ENCODE measurements at regions of chr17 and their contacts with region 1.

Region 1: DNA sequence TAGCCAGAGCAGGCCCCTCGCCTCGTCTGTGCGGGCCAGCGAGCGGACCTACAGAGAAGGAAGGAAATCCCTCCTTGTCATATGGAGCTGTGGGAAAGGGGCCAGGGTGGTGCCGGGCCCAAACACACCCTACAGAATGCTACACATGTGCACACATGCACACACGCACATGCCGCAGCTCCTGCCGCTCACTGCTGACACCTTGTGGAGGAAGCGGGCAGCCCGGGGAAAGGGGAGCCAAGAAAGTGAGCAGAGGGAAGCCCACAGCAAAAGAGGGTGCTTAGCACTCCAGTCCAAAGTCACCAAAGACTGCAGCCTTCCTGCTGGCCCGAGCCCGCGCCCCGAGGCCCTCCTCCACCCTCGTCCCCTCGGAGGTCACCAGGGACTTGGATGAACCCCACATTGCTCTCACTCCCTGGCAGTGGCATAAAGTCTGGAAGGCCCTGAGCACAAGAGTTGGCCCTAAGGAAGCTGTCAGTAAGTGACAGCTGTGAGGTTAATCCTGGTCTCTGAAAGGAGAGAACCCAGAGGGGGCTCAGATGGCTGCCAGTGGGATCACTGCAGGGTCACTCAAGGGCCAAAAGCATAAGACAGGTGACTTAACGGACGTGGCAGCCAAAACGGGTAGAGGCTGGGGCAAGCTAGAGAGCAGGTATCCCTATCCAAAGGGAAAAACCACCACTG is 68.2 kb downstream of the MYO18A start:
- DNase-seq: peak; percentile 82
- H3K4me3 ChIP-seq: no peak overlapping the region
- H3K27ac ChIP-seq: no peak overlapping the region
- H3K4me1 ChIP-seq: peaks cover 5 to 39% of the 10 kb centered on the region in 2 experiments; a peak in 2 of 4 replicates
- H3K27me3 ChIP-seq: no peaks in the 10 kb centered on the region
- CTCF ChIP-seq: peak; percentile 91
- EP300 ChIP-seq: no peak
- RAD21 ChIP-seq: peak; percentile 94

Region 2: DNA sequence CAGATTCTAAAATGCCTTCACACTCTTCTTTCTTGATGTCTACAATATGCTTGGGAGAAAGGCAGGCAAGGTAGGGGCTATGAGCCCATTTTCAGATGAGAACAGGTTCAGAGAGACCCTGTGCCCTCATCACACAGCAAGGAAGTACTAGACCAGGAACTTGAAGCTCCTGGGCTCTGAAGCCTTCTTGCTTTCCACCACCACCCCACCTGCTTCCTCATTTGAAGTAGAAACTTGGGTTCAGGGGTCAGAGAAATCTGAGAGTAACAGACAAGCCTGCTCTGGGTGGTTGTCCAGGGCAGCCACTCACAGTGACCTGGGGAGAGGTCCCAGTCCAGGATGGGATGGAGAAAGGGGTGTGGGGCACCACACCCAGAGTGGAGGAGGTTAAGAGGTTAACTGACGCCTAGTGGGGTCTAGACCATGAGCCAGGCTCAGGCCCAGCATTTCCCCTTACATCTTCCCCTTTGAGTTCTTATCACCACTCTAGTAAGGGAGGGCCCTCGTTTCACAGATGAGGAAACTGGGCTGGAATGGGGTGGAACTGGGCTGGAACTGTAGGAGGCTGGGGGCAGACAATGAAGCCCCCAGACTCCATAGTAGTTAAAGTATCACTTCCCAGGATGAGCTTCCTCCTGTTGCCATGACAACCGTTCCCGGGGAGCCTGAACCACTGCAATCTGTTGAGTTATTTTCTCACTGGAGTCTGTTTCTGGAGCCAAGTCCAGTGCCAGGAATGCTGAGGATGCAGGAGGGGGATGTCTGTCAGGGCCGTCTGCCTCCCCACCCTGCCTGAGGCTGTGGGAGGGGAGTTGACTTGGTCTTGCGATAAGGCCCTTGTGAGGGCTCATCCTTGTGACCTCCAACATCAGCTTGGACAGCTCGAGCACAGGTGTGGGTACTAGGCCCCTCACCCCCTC is 144.5 kb before region 1 on chr17:
- CTCF ChIA-PET with region 1: interaction called, 947 read pairs
- POLR2A ChIA-PET with region 1: interaction called, 20 read pairs
- DNase-seq: no peak
- H3K4me3 ChIP-seq: no peak overlapping the region
- H3K27ac ChIP-seq: no peak overlapping the region
- H3K4me1 ChIP-seq: peaks cover 0 to 37% of the 10 kb centered on the region in 2 experiments; a peak in 3 of 4 replicates
- H3K27me3 ChIP-seq: no peaks in the 10 kb centered on the region; the same call in 1 of the 2 replicates
- CTCF ChIP-seq: no peak
- EP300 ChIP-seq: no peak
- RAD21 ChIP-seq: no peak

Region 3: DNA sequence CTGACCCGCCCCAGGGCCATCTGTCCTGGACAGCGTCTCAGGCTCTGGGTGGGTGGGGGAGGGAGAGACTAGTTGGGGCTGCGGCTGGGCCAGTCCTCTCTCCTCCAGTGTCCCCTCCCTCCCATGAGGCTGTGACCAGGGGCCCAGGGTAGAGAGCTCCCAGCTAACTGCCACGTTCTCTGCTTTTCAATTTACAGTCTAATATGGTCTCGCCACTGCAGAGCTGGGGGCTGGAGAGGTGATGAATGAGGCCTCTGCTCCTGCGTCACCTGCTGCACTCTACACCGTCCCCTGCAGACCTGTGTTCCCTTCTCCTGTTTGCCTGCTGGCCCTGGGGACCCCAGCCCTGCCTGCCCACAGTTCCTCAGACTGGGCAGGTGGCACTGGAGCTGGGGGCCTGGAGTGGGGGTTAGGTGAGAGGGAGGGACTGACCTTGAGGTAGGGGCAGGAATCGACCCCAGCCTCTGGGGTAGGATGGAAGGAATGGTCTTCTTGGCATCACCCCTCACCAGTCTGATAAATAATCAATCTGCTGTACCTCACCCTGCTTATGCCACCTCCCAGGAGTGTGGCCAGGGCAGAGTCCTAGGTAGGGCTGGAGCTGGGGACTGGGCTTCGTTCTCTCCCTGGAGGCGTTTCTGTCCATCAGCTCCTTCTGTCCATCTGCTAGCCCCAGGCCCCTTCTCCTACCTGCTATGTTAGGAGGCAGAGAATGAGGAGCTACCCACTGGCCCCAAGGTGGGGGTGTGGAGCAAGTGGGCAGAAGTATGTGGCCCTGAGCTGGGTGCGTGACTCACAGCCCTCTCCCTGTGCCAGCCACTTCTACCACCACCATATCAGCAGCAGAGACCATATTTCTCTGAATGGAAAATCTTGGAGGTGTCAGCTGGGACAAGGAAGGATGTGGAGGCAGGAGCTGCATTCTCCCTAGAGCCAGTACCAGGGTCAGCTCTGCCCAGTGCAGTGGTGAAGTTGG is 119.0 kb before region 1 on chr17:
- CTCF ChIA-PET with region 1: interaction called, 25 read pairs
- POLR2A ChIA-PET with region 1: no interaction called
- DNase-seq: no peak
- H3K4me3 ChIP-seq: no peak overlapping the region
- H3K27ac ChIP-seq: no peak overlapping the region
- H3K4me1 ChIP-seq: peaks cover 0 to 27% of the 10 kb centered on the region in 2 experiments; a peak in 1 of 4 replicates
- H3K27me3 ChIP-seq: no peaks in the 10 kb centered on the region
- CTCF ChIP-seq: no peak
- EP300 ChIP-seq: no peak
- RAD21 ChIP-seq: no peak

Region 4: GRCh38 chr17:29048440-29049368 is 63.3 kb before region 1 on chr17:
- CTCF ChIA-PET with region 1: interaction called, 180 read pairs
- POLR2A ChIA-PET with region 1: interaction called, 3 read pairs
- DNase-seq: peak; percentile 80
- H3K4me3 ChIP-seq: no peak overlapping the region
- H3K27ac ChIP-seq: peak overlapping the region; percentile 55 to 99
- H3K4me1 ChIP-seq: peaks cover 27 to 64% of the 10 kb centered on the region in 2 experiments
- H3K27me3 ChIP-seq: no peaks in the 10 kb centered on the region
- CTCF ChIP-seq: no peak
- EP300 ChIP-seq: peak in 1 of 2 experiments; percentile 100; a peak in 2 of 4 replicates
- RAD21 ChIP-seq: peak; percentile 20

Region 5: DNA sequence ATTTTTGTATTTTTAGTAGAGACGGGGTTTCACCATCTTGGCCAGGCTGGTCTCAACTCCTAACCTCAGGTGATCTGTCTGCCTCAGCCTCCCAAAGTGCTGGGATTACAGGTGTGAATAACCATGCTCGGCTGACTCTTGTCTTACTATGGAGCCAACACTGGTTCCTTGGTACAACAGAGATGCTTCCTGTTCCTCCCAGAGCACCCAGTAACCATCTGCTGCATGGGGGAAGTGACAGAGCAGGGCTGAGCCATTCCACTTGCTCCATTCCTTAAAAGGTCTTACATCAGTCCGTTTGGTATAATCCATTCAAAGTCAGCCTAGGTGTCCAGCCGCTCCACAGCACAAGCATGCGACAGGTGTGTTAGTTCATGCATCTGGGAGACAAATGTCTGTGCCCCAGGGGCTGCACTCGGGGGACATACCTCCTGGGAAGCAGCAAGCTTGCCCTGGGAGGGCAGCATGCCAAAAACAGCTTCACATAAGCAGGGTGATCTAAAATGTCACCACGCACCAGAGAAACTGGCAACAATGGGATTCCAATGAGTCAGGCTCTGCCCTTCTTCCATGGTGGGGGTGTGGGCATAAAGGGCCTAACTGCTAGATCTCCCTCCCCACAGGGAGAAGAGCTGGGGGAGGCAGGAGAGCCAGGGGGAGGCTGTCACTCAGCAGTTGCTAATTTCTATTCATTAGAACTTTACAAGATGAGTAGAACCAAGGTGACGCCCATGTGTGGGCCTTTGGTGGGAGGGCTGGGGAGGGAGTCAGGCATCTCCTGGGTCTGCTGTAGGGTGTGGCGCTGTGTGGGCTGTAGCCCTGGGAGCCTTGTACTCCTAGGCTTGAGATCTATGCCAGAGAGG is 33.5 kb before region 1 on chr17:
- CTCF ChIA-PET with region 1: interaction called, 31 read pairs
- POLR2A ChIA-PET with region 1: no interaction called
- DNase-seq: no peak
- H3K4me3 ChIP-seq: no peak overlapping the region
- H3K27ac ChIP-seq: no peak overlapping the region
- H3K4me1 ChIP-seq: peaks cover 0 to 12% of the 10 kb centered on the region in 2 experiments; a peak in 1 of 4 replicates
- H3K27me3 ChIP-seq: no peaks in the 10 kb centered on the region
- CTCF ChIP-seq: no peak
- EP300 ChIP-seq: no peak
- RAD21 ChIP-seq: no peak

Region 6: DNA sequence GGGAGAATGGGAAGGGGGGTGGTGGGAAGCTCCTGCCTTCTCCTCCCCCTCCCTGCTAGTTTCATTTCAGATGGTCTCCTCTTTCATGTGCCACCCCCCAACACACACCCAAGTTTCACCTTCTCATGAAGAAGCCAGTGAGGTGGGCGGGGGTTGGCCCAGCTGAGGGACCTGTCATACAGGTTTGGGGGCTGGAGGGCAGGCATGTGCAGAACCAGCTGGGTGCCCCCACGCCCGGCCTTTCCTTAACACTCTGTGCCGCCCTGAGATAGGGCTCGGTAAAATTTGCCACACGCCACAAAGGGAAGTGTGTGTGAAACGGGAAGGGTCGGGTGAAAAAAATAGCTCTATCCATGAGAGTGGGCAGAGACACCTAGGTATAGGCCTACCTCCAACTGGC is 11.7 kb before region 1 on chr17:
- CTCF ChIA-PET with region 1: interaction called, 14 read pairs
- POLR2A ChIA-PET with region 1: interaction called, 3 read pairs
- DNase-seq: no peak
- H3K4me3 ChIP-seq: no peak overlapping the region
- H3K27ac ChIP-seq: no peak overlapping the region
- H3K4me1 ChIP-seq: peaks cover 0 to 37% of the 10 kb centered on the region in 2 experiments; a peak in 3 of 4 replicates
- H3K27me3 ChIP-seq: no peaks in the 10 kb centered on the region
- CTCF ChIP-seq: no peak
- EP300 ChIP-seq: no peak
- RAD21 ChIP-seq: no peak

Region 7: DNA sequence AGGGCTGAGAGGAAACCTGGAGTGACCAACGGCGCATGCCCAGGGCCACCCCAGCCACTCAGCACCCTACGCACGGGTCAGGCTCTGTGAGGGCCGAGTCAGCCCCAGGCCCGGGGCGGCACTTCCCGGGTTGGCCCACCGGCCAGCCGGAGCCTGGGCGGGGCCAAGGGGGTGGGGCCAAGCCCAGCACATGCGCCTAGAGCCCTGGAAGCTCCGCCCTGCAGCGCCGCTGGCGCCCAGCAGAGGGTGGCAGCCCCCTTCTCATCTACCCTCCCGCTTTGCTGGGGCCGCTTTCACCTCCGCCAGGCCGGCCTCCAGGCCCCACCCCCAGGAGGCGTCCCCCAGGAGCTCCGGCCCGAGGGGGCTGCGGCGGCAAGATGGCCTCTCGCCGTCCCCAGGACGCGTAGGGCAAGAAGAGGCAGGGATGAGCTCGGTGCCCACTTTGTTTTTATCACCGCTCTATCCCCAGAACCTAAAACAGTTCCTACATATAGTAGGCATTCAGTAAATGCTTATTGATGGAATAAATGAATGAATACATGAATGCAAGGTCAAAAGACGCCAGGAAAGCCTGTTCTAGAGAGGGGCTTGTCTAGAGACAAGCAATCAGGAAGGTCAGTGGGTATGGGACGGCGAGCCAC is 37.0 kb after region 1 on chr17:
- CTCF ChIA-PET with region 1: interaction called, 535 read pairs
- POLR2A ChIA-PET with region 1: no interaction called
- DNase-seq: peak; percentile 99
- H3K4me3 ChIP-seq: peak overlapping the region; percentile 47 to 50
- H3K27ac ChIP-seq: peak overlapping the region; percentile 50 to 82; a peak in 3 of 4 replicates
- H3K4me1 ChIP-seq: peaks cover 30 to 35% of the 10 kb centered on the region in 2 experiments
- H3K27me3 ChIP-seq: no peaks in the 10 kb centered on the region
- CTCF ChIP-seq: peak; percentile 81
- EP300 ChIP-seq: 0 out of 4 replicates have a peak, but pooled peaks of 1 of the 2 experiments have one; percentile 17
- RAD21 ChIP-seq: peak; percentile 91

Measured in SK-N-SH (cell line).